CD4-positive, alpha-beta memory T cell (primary cell): ENCODE measurements at regions of chr7 and their contacts with region 1.

Region 1: DNA sequence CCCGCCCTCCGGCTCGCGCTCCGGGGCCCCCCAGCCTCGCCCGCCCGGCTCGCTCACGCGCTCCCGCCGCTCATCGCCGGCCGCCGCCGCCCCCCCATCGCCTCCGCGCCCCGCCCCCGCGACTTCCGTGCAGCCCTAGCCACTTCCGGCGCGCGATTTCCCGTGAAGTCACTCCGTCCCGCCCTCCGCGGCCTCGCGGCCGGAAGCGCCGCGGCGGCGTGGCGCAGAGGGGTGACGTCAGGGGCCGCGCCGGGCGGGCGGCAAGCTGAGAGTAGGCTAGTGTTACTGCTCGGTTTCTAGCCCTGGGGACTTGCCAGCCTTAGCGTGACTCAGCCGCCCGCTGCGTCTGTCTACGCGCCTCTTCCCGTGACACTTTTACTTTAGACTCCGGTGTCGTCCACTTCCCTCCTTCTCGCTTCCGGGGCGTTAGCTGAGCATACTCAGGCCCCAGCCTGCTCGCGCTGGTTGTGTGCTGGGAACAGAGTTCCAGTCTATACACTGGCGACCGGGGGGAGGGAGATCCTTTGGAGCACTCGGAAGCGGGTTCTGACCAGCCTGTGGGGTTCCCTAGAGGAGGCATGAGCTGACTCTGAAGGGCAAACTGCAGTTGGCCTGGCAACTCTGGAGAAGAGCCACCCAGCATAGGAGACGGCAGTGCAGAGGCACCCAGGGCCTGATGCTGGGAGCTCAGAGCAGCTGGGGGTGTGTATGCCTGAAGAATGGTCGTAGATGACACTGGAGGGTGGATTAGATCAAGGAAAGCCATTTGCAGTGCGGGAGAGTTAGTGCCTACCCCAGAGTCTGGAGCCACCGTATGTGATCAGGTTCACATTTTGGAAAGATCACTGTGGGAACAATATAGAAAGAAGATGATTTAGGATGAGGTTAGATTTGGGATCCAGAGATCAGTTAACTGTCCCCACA is at the start of gene PURB:
- DNase-seq: peak; percentile 97 to 99 (median 98)
- H3K4me3 ChIP-seq: peak within 1 kb of the TSS; percentile 68 to 99
- H3K4me3 Mint-ChIP-seq: peak within 1 kb of the TSS; percentile 92 to 99 (median 95)
- H3K27ac ChIP-seq: peak within 1 kb of the TSS; percentile 96
- H3K27ac Mint-ChIP-seq: peak within 1 kb of the TSS; percentile 99 to 100 (median 100)
- H3K4me1 ChIP-seq: peaks cover 56% of the 10 kb centered on the region
- H3K4me1 Mint-ChIP-seq: peaks cover 24 to 67% (median 37%) of the 10 kb centered on the region in 4 donors
- H3K27me3 ChIP-seq: no peaks in the 10 kb centered on the region
- H3K27me3 Mint-ChIP-seq: no peaks in the 10 kb centered on the region
- total RNA-seq, gene PURB: 26.6 to 27.4 TPM

Region 2: GRCh38 chr7:44573464-44574286 is 312.0 kb before region 1 on chr7 and contains the start of gene DDX56:
- CTCF ChIA-PET with region 1: interaction called, 4 read pairs
- POLR2A ChIA-PET with region 1: interaction called, 15 read pairs
- intact Hi-C with region 1: no loop called
- DNase-seq: peak; percentile 87 to 93 (median 88)
- H3K4me3 ChIP-seq: peak within 1 kb of the TSS; percentile 93
- H3K4me3 Mint-ChIP-seq: peak within 1 kb of the TSS; percentile 94 to 99 (median 96)
- H3K27ac ChIP-seq: peak within 1 kb of the TSS; percentile 94
- H3K27ac Mint-ChIP-seq: peak within 1 kb of the TSS; percentile 97 to 99 (median 99)
- H3K4me1 ChIP-seq: peaks cover 30% of the 10 kb centered on the region
- H3K4me1 Mint-ChIP-seq: peaks cover 26 to 41% (median 34%) of the 10 kb centered on the region in 4 donors
- H3K27me3 ChIP-seq: no peaks in the 10 kb centered on the region
- H3K27me3 Mint-ChIP-seq: no peaks in the 10 kb centered on the region
- total RNA-seq, gene DDX56: 109 to 114 TPM

Region 3: DNA sequence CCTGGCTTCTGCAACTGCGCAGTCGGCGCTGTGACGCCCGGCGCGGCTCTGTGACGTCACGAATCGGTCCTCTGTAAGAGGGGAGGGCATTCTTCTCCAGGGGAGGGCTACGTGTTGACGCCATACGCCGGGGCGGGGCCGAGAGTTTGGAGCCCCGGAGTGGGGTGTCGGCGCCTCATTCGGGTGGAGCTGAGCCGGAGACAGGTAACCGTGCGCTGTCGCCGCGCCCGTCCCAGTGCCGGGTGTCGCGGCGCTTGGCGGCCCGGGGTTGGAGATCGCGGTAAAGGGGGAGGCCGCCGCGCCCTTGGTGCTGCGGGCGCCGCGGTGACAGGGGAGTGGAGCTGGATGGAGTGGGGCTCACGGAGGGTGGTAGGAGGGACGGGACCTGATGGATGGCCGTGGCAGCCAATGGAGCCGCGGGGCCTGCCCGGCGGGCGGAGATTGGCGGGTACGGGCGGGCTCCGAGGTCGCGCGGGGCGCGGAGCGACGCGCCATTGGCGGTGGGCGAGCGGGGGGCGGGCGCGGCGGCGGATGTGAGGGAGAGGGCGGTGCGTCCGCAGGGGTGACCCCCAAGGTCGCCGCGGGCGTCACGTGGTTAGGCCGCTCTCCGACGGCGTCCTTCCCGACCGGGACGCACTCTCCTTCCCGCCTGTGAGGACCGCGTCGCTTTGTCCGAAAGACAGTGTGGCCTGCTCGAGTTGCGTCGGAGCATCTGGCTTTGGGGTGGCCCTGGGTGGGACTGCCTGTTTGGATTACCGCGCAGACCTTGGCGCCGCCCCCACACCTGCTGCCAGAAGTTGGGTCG is 279.0 kb before region 1 on chr7 and contains the start of gene OGDH:
- CTCF ChIA-PET with region 1: no interaction called
- POLR2A ChIA-PET with region 1: interaction called, 33 read pairs
- intact Hi-C with region 1: loop called (anchors 1 kb)
- DNase-seq: peak; percentile 99 to 100 (median 100)
- H3K4me3 ChIP-seq: peak within 1 kb of the TSS; percentile 54 to 63
- H3K4me3 Mint-ChIP-seq: peak within 1 kb of the TSS; percentile 82 to 100 (median 98)
- H3K27ac ChIP-seq: peak within 1 kb of the TSS; percentile 97
- H3K27ac Mint-ChIP-seq: peak within 1 kb of the TSS; percentile 99 to 100 (median 99)
- H3K4me1 ChIP-seq: peaks cover 40% of the 10 kb centered on the region
- H3K4me1 Mint-ChIP-seq: peaks cover 19 to 50% (median 38%) of the 10 kb centered on the region in 4 donors
- H3K27me3 ChIP-seq: no peaks in the 10 kb centered on the region
- H3K27me3 Mint-ChIP-seq: peaks cover 0 to 2% of the 10 kb centered on the region in 2 donors
- total RNA-seq, gene OGDH: 116 to 126 TPM

Region 4: GRCh38 chr7:44875241-44875640 is 10.4 kb before region 1 on chr7:
- CTCF ChIA-PET with region 1: no interaction called
- POLR2A ChIA-PET with region 1: interaction called, 14 read pairs
- intact Hi-C with region 1: no loop called
- DNase-seq: no peak
- H3K4me3 ChIP-seq: no peak overlapping the region
- H3K4me3 Mint-ChIP-seq: no peak overlapping the region
- H3K27ac ChIP-seq: no peak overlapping the region
- H3K27ac Mint-ChIP-seq: no peak overlapping the region
- H3K4me1 ChIP-seq: peaks cover 9% of the 10 kb centered on the region
- H3K4me1 Mint-ChIP-seq: peaks cover 6 to 9% (median 8%) of the 10 kb centered on the region in 4 donors
- H3K27me3 ChIP-seq: no peaks in the 10 kb centered on the region
- H3K27me3 Mint-ChIP-seq: no peaks in the 10 kb centered on the region

Region 5: GRCh38 chr7:44921607-44922359 is 36.1 kb after region 1 on chr7:
- CTCF ChIA-PET with region 1: interaction called, 10 read pairs
- POLR2A ChIA-PET with region 1: interaction called, 3 read pairs
- intact Hi-C with region 1: loop called (anchors 1 kb)
- DNase-seq: peak; percentile 83 to 91 (median 86)
- H3K4me3 ChIP-seq: no peak overlapping the region
- H3K4me3 Mint-ChIP-seq: no peak overlapping the region
- H3K27ac ChIP-seq: no peak overlapping the region
- H3K27ac Mint-ChIP-seq: peak overlapping the region in 5 of 7 donors; percentile 37 to 90 (median 81)
- H3K4me1 ChIP-seq: peaks cover 4% of the 10 kb centered on the region
- H3K4me1 Mint-ChIP-seq: peaks cover 0 to 10% (median 7%) of the 10 kb centered on the region in 4 donors
- H3K27me3 ChIP-seq: no peaks in the 10 kb centered on the region
- H3K27me3 Mint-ChIP-seq: peaks cover 0 to 2% of the 10 kb centered on the region in 2 donors

Region 6: DNA sequence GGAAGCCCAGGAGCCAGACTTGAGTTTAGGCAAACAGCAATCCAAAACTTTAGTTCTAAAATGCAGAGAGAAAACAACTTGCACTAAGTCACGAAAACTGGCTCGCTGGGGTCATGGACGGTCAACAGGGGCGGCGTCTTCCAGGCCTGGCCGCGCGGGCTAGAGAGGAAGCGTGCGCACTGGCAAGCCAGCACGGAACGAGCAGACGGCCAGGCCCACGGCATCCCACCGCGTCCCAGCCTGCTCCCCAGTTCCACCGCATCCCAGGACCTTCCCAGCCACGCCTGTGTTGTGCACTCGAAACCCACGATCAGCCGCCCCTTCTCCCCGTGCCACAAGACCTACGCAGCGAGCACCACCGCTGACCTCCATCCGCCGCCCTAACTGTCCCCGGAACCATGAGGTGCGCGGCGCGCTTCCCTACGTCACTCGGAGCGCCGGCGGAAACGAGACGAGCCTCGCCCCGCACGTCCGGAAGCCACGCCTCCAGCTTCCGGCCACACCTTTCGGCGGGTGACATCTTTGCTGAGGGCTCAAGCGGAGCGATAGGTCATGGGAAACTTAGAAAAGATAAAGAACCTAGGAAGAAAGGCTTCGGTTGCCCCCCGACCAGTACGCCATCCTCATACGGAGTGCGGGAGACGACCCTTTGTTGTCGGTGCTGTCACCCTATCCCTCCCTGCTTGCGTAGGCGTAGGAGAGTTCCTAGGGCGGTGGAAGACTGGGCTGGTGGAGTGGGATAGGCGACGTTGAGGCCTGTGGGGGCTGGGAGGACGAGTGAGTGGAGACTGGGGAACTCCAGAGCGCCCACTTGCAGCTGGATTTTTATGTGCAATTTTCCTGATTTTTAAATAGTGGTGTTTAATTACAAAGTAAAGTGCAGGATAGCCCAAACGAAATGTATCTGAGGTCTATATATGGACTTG is 225.9 kb after region 1 on chr7 and contains the start of gene TBRG4:
- CTCF ChIA-PET with region 1: no interaction called
- POLR2A ChIA-PET with region 1: interaction called, 20 read pairs
- intact Hi-C with region 1: loop called (anchors 1 kb)
- DNase-seq: peak; percentile 91 to 94 (median 94)
- H3K4me3 ChIP-seq: peak within 1 kb of the TSS; percentile 94 to 95
- H3K4me3 Mint-ChIP-seq: peak within 1 kb of the TSS; percentile 91 to 99 (median 97)
- H3K27ac ChIP-seq: peak within 1 kb of the TSS; percentile 87
- H3K27ac Mint-ChIP-seq: peak within 1 kb of the TSS; percentile 97 to 100 (median 99)
- H3K4me1 ChIP-seq: peaks cover 48% of the 10 kb centered on the region
- H3K4me1 Mint-ChIP-seq: peaks cover 28 to 60% (median 44%) of the 10 kb centered on the region in 4 donors
- H3K27me3 ChIP-seq: no peaks in the 10 kb centered on the region
- H3K27me3 Mint-ChIP-seq: peaks cover 4% of the 10 kb centered on the region in 2 donors
- total RNA-seq, gene TBRG4: 103 to 129 TPM